Right ventricle myocardium inferior (tissue), 1 donor: ENCODE measurements at regions of chr22 and their contacts with region 1.

Region 1: GRCh38 chr22:42688241-42689211 is 32.1 kb downstream of the A4GALT start:
- DNase-seq: peak; percentile 91
- ATAC-seq: peak; percentile 81

Region 2: DNA sequence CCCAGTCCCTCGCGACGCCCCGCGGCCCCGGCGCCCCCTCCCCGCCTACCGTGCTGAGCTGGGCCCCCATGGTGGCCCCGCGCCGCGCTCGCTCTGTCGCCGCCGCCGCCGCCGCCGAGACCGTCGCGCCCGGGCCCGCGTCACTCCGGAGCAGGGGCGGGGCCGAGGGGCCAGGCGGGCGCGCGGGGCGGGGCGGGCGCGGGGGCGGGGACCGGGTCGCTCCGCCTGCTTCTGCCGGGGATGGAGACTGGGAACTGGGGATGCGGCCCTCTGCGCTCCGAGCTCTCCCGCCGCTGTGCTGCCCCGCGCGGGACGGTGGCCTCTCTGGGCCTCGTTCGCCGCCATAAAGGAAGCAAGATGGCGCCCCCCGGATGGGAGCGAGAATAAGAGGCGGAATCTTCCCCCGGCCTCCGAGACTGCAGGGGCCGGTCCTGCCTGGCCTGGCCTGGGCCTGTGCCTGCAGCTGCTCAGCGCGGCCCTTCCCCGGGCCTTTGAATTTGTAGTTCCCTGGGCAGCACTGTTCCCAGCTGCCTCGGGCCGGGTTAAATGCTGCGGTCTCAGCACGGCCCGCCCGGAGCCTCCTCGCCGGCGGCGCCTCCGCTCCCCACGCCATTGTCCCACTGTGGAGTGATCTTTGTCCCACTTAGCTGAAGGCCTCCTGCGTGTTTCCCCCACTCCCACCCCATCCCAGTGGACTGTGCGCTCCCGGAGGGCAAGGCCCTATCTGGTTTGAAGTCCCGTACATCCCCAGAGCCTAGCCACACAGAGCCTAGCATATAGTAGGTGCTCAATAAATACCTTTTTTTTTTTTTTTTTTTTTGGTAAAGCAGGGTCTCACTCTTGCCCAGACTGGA is 39.1 kb before region 1 on chr22 and contains the start of gene CYB5R3:
- intact Hi-C with region 1: loop called (anchors 5 kb)
- DNase-seq: peak; percentile 93
- ATAC-seq: peak; percentile 73
- total RNA-seq, gene CYB5R3: 268 TPM

Region 3: DNA sequence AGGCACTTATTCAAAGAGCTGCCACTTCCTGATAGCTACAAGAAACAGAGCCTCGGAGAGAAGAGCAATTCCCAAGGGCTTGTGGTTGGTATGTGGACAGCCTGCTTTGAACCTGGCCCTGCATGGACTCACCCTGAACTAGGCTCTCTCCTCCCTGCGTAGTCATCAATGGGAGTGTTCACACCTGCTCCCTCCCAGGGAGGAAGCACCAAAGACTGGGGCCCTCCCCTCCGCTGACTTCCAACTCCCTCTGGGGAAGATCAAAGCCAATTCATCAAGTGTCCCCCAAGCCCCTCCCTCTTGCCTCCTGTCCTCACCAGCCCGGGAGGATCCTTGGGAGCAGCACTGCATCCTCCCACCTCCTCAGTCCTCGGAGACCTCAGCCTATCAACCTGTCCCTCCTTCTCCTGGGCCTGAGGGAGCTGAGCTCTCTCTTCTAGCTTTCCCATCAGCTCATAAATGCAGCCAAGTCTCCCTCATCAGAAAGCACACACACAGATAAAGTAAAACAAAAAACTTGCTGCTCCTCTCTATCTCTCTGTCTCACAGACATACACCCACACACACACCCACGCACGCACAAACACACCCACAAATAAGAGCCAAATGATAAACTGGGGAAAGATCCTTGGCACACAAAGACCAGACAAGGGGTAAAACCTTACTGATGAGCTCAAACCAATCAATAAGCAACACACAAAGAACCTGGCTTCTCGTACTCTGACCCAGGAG is 28.8 kb after region 1 on chr22:
- intact Hi-C with region 1: loop called (anchors 2 kb)
- DNase-seq: no peak
- ATAC-seq: no peak

Region 4: GRCh38 chr22:42769574-42770447 is 81.3 kb after region 1 on chr22:
- intact Hi-C with region 1: loop called (anchors 5 kb)
- DNase-seq: peak; percentile 77
- ATAC-seq: peak; percentile 67

Region 5: DNA sequence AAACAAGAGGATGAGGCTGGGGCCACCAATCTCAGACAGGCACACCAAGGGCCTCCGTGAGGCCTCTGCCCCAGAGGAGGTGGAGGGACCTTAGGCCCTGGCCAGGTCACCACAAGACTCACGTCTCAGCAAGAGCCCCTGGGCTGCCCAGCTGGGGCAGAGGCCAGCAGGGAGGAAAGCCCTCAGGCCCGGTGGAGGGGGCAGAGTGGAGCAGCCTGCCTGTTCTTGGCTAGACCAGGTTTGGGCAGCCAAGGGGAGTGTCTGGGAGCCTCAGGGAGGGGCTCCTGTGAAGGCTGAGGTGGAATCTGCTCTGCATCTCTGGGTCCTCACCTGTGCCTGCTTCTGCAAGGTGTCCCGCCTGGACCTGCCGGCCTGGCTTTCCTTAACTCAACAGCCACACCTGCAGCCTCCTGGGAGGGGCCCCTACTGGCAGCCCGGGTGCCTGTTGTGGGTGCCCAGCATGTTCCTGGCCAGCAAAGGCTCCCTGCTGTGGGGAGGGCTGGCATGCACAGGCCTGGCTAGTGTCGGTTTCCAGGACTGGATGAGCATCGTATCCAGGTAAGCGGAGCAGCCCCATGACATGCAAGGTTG is 486.5 kb after region 1 on chr22:
- intact Hi-C with region 1: no loop called
- DNase-seq: no peak
- ATAC-seq: no peak